Body of pancreas (tissue), 4 donors: ENCODE measurements at regions of chr2 and their contacts with region 1.

Region 1: GRCh38 chr2:177254433-177255226 is 9.9 kb downstream of the NFE2L2 start:
- DNase-seq: peak; percentile 39 to 65 (median 54)
- ATAC-seq: peak; percentile 41
- H3K4me3 ChIP-seq: no peak overlapping the region
- H3K27ac ChIP-seq: no peak overlapping the region
- H3K4me1 ChIP-seq: peaks cover 89% of the 10 kb centered on the region
- H3K27me3 ChIP-seq: no peaks in the 10 kb centered on the region
- CTCF ChIP-seq: peak in 6 of 7 experiments; percentile 25 to 39 (median 34)
- POLR2A ChIP-seq: no peak

Region 2: GRCh38 chr2:176879426-176879995 is 375.1 kb before region 1 on chr2:
- intact Hi-C with region 1: no loop called
- DNase-seq: no peak
- ATAC-seq: no peak
- H3K4me3 ChIP-seq: no peak overlapping the region
- H3K27ac ChIP-seq: no peak overlapping the region
- H3K4me1 ChIP-seq: no peaks in the 10 kb centered on the region
- H3K27me3 ChIP-seq: no peaks in the 10 kb centered on the region
- CTCF ChIP-seq: no peak
- POLR2A ChIP-seq: no peak

Region 3: DNA sequence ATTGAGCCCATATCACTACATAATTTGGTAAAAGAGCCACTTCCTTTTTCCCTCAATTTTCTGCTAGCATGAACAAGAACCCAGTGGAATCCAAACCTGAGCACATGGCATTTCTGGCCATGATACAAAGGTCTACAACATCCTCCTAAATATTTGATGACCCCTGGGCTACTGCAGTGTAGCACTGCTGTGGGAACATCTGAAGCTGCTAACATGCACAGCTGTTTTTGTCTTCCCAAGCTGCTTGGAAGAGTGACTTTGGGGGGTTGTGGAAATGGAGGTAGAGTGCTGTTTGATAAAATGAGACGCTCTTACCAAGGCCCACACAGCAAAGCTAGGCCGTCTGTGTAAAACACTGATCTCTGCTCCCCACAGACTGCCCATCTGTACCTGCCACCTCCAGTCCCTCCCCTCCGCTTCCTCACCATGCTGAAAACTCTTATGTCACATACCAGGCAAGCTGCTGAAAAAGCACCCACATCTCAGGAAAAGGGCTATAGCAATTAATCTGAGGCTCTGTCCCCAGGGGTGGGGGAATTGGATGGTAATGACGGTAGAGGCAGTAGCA is 239.2 kb before region 1 on chr2:
- intact Hi-C with region 1: no loop called
- DNase-seq: no peak
- ATAC-seq: no peak
- H3K4me3 ChIP-seq: no peak overlapping the region
- H3K27ac ChIP-seq: no peak overlapping the region
- H3K4me1 ChIP-seq: no peaks in the 10 kb centered on the region
- H3K27me3 ChIP-seq: no peaks in the 10 kb centered on the region
- CTCF ChIP-seq: no peak
- POLR2A ChIP-seq: no peak

Region 4: GRCh38 chr2:177118636-177119035 is 136.0 kb before region 1 on chr2:
- intact Hi-C with region 1: no loop called
- DNase-seq: no peak
- ATAC-seq: no peak
- H3K4me3 ChIP-seq: no peak overlapping the region
- H3K27ac ChIP-seq: no peak overlapping the region
- H3K4me1 ChIP-seq: no peaks in the 10 kb centered on the region
- H3K27me3 ChIP-seq: no peaks in the 10 kb centered on the region
- CTCF ChIP-seq: no peak
- POLR2A ChIP-seq: no peak

Region 5: GRCh38 chr2:177221534-177221933 is 33.1 kb before region 1 on chr2:
- intact Hi-C with region 1: loop called (anchors 5 kb)
- DNase-seq: no peak
- ATAC-seq: no peak
- H3K4me3 ChIP-seq: no peak overlapping the region
- H3K27ac ChIP-seq: no peak overlapping the region
- H3K4me1 ChIP-seq: peaks cover 24% of the 10 kb centered on the region
- H3K27me3 ChIP-seq: no peaks in the 10 kb centered on the region
- CTCF ChIP-seq: no peak
- POLR2A ChIP-seq: no peak